ENCODE measurements at regions of chr6 and their contacts with region 1.

Region 1: DNA sequence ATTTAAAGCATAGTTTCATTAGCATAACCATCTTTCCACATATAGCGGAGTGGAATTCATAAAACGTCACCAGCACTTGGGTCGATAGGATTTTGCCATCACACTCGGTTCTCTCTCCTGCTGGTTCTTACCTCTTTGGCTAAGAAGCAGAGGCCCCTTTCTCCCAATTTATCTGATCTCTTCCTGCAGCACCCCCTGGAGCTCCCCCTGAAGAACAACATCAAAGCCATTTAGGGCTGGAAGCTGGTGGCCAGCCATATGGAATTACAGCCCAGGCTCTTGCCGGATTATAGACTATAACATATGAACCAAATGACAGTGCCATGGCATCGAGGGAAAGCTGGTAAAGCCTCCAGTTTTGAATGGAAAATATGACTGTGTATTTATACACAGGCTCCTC is 6.4 kb upstream of the KIF6 start:
- DNase-seq: peak; percentile 18
- ATAC-seq: peak; percentile 62
- H3K4me3 Mint-ChIP-seq: no peak overlapping the region
- H3K27ac Mint-ChIP-seq: no peak overlapping the region
- H3K4me1 Mint-ChIP-seq: peaks cover 38% of the 10 kb centered on the region
- H3K27me3 Mint-ChIP-seq: peaks cover 4% of the 10 kb centered on the region
- CTCF ChIP-seq: no peak

Region 2: DNA sequence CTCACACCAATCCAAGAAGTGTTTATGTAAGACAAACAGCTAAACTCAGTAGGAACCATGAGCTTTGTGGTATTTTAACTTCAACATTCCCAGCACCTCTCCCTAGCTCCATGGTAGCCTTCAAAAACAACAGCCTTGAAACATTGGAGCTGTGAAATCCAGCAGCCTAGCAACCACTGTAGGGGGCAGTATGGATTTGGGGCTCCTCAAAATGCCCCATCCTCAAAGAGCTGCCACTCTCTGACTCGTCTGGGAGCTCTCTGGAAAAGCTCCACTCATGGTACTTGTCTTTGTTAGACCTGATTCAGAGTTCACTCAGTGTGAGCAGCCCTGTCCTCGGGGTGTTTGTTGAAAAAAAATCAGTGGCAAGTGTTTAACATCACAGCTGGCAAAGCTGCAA is 89.3 kb before region 1 on chr6:
- CTCF ChIA-PET with region 1: interaction called, 12 read pairs
- POLR2A ChIA-PET with region 1: no interaction called
- DNase-seq: peak; percentile 22
- ATAC-seq: peak; percentile 87
- H3K4me3 Mint-ChIP-seq: no peak overlapping the region
- H3K27ac Mint-ChIP-seq: 0 out of 2 replicates have a peak overlapping the region, but pooled peaks have one; percentile 5
- H3K4me1 Mint-ChIP-seq: peaks cover 5% of the 10 kb centered on the region; the same call in 1 of the 2 replicates
- H3K27me3 Mint-ChIP-seq: no peaks in the 10 kb centered on the region
- CTCF ChIP-seq: 0 out of 2 replicates have a peak, but pooled peaks have one; percentile 13